ENCODE measurements at regions of chr9 and their contacts with region 1.

Region 1: GRCh38 chr9:84315278-84315877 is 25.2 kb downstream of the SLC28A3 start:
- DNase-seq: peak; percentile 68
- H3K4me3 ChIP-seq: no peak overlapping the region
- H3K27ac ChIP-seq: no peak overlapping the region
- H3K4me1 ChIP-seq: peaks cover 2% of the 10 kb centered on the region
- H3K27me3 ChIP-seq: peaks cover 0 to 5% of the 10 kb centered on the region in 2 experiments
- CTCF ChIP-seq: peak; percentile 57 to 74
- POLR2A ChIP-seq: no peak

Region 2: GRCh38 chr9:83920927-83921707 is 394.3 kb before region 1 on chr9 and contains the start of gene KIF27:
- CTCF ChIA-PET with region 1: interaction called, 10 read pairs
- POLR2A ChIA-PET with region 1: no interaction called
- dilution Hi-C with region 1: no loop called
- intact Hi-C with region 1: loop called (anchors 5 kb)
- DNase-seq: peak; percentile 98
- H3K4me3 ChIP-seq: peak within 1 kb of the TSS; percentile 41 to 78 (median 69)
- H3K27ac ChIP-seq: peak within 1 kb of the TSS; percentile 69
- H3K4me1 ChIP-seq: peaks cover 10% of the 10 kb centered on the region
- H3K27me3 ChIP-seq: no peaks in the 10 kb centered on the region
- CTCF ChIP-seq: peak; percentile 8 to 36
- POLR2A ChIP-seq: peak; percentile 93
- total RNA-seq, gene KIF27: 3.2 and 3.5 TPM in 2 replicates

Region 3: GRCh38 chr9:83937911-83938323 is 377.5 kb before region 1 on chr9:
- CTCF ChIA-PET with region 1: interaction called, 14 read pairs
- POLR2A ChIA-PET with region 1: no interaction called
- dilution Hi-C with region 1: no loop called
- intact Hi-C with region 1: loop called (anchors 1 kb)
- DNase-seq: peak; percentile 70
- H3K4me3 ChIP-seq: no peak overlapping the region
- H3K27ac ChIP-seq: no peak overlapping the region
- H3K4me1 ChIP-seq: peaks cover 7% of the 10 kb centered on the region
- H3K27me3 ChIP-seq: no peaks in the 10 kb centered on the region
- CTCF ChIP-seq: peak; percentile 48 to 49
- POLR2A ChIP-seq: no peak

Region 4: DNA sequence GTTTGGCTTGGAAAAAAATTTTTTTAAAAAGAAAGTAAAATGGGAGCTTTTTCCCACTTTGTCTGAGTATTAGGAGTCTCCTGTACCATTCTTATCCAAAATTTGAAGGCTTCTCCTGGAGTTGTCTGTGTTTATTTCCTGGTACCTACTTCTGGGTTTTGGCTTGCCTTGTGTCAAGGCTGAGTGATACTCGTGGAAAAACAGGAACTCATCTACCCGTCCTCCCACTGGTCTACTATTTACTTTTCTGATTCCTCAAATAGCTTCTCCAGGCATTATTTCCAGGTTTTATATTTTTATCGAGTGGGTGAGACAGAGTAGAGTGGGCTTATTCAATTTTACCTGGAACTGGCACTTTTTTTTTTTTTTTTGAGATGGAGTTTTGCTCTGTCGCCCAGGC is 235.4 kb before region 1 on chr9:
- CTCF ChIA-PET with region 1: no interaction called
- POLR2A ChIA-PET with region 1: no interaction called
- dilution Hi-C with region 1: no loop called
- intact Hi-C with region 1: no loop called
- DNase-seq: no peak
- H3K4me3 ChIP-seq: no peak overlapping the region
- H3K27ac ChIP-seq: no peak overlapping the region
- H3K4me1 ChIP-seq: no peaks in the 10 kb centered on the region
- H3K27me3 ChIP-seq: peaks cover 0 to 2% of the 10 kb centered on the region in 2 experiments
- CTCF ChIP-seq: no peak
- POLR2A ChIP-seq: no peak

Region 5: GRCh38 chr9:84570482-84571154 is 255.2 kb after region 1 on chr9:
- CTCF ChIA-PET with region 1: no interaction called
- POLR2A ChIA-PET with region 1: no interaction called
- dilution Hi-C with region 1: no loop called
- intact Hi-C with region 1: no loop called
- DNase-seq: no peak
- H3K4me3 ChIP-seq: no peak overlapping the region
- H3K27ac ChIP-seq: no peak overlapping the region
- H3K4me1 ChIP-seq: no peaks in the 10 kb centered on the region
- H3K27me3 ChIP-seq: no peaks in the 10 kb centered on the region
- CTCF ChIP-seq: no peak
- POLR2A ChIP-seq: no peak

Measured in endothelial cell of umbilical vein (primary cell).